ENCODE measurements at regions of chr20 and their contacts with region 1.

Region 1: DNA sequence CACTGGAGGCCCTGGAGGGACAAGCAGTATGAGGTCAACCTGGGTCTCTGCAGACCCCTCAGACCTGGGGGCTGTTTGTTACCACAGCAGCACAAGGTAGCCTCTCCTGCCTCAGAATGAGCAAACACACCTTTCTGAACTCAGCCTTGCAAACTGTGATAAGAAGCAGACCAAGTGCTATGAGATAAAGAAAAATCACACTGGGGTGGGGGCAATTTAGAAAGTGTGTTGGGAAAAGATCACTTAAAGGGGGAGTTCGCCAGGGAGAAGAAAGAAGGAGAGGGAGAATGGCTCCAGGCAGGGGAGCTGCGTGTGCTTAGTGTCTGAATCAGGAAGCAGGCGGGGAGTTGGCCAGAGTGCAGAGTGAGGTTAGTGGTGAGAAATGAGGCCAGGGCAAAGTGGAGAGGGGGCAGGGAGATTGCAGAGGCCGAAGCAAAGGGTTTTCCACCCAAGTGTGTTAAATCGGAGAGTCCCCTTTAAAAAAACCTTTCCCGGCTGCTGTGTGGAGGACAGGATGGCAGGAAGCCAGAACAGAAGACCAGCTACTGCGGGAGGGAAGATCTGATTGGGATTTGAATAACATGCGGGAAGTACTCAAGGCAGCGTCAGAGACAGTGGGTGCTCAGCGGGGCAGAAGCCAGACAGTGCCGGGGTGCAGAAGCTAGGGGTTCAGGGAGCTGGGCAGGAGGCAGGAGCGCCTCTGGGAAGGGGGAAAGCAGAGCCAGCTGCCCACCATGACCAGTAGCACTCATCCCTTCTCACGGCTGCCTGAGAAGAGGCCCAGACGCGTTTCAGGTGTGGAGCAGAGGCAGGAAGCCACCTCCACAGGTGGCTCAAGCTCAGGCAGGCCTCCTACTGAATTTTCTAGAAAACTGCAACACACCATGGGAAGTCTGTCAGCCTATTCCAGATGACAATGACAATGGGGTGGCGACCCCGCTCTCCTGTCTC is 9.0 kb downstream of the ADA start:
- DNase-seq: no peak
- ATAC-seq: peak; percentile 15
- H3K4me3 Mint-ChIP-seq: peak overlapping the region; percentile 42
- H3K27ac Mint-ChIP-seq: peak overlapping the region; percentile 73
- H3K4me1 Mint-ChIP-seq: peaks cover 69% of the 10 kb centered on the region
- H3K27me3 Mint-ChIP-seq: no peaks in the 10 kb centered on the region
- CTCF ChIP-seq: no peak

Region 2: DNA sequence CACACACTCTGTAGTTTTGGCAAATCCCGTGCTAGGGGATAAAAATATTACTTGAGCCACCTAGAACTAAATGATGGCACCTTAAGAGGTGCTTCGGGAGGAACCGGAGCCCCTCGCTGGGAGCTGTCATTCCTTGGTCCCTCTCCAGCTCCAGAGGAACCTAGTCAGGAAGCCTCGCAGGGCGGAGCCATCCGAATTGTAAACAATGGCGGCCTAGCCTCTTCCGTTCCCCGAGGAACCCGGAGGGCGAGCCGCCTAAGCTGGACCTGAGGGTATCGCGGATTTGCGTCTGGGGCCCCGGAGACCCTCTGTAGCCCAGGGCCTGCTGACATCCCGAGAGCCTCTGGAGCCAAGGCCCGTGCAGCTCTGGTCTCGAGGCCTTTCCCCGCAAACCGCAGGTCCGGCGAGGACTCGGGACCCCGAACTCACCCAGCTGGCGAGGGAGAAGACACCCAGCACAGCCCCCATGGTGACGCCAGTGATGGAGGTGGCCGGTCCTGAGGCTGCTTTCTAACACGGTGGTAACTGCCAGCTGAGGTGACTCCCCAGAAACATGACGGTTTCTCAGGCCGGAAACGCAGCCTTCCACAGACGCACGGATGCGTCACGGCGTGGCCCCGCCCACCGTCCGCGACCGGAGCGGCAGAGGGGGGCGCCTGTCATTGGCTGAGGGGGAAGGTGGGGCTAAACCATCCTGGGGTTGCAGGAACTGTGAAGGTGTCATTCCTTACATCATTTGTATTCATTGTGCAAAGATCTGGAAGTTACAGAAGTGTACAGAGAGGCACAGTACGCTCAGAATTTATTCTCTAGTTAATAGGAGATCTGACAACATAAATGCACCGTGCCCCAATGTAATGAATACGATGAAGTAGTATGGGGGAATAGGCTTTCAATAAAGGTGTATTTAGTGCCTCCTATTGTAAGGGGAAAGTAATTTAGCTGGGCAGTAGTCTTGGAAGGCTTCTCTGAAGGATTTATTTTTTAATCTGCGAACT is 120.7 kb before region 1 on chr20 and contains the start of gene SERINC3:
- CTCF ChIA-PET with region 1: no interaction called
- POLR2A ChIA-PET with region 1: interaction called, 9 read pairs
- intact Hi-C with region 1: loop called (anchors 2 kb)
- DNase-seq: peak; percentile 97
- ATAC-seq: peak; percentile 98
- H3K4me3 Mint-ChIP-seq: peak within 1 kb of the TSS; percentile 89
- H3K27ac Mint-ChIP-seq: peak within 1 kb of the TSS; percentile 83
- H3K4me1 Mint-ChIP-seq: peaks cover 44% of the 10 kb centered on the region
- H3K27me3 Mint-ChIP-seq: no peaks in the 10 kb centered on the region
- CTCF ChIP-seq: no peak
- total RNA-seq, gene SERINC3: 38.1 and 41.4 TPM in 2 replicates

Region 3: DNA sequence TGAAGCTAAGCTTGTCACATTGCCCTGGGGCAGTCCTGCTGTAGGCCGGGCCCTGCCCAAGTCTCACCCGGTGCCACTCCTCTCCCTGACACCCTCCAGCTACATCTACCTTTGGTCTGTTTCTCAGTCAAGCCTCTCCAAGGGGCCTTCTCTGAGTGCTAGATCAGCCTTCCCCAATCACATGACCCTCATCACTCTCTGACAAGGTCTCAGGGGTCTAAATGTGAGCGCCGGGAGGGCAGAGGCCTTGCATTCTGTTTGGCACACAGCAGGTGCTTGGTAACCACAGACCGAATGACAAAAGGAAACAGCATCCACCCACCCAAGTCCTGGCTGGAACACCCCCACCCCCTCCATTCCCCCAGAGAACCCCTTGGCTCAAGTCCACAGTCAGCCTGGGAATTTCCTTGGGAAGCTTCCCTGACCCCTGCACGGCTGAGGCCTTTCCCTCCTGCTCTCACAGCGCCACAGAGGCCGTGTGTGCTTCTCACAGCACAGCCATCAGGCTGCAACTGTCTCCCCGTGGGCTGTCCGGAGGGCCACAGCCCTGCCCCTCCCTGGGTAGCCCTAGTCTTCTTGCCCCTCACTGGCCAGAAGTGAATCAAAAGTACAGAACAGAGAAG is 27.2 kb before region 1 on chr20:
- CTCF ChIA-PET with region 1: interaction called, 6 read pairs
- POLR2A ChIA-PET with region 1: interaction called, 14 read pairs
- intact Hi-C with region 1: loop called (anchors 2 kb)
- DNase-seq: no peak
- ATAC-seq: peak; percentile 41
- H3K4me3 Mint-ChIP-seq: no peak overlapping the region
- H3K27ac Mint-ChIP-seq: peak overlapping the region; percentile 80
- H3K4me1 Mint-ChIP-seq: peaks cover 69% of the 10 kb centered on the region
- H3K27me3 Mint-ChIP-seq: no peaks in the 10 kb centered on the region
- CTCF ChIP-seq: no peak

Region 4: GRCh38 chr20:44683263-44684046 is 41.0 kb after region 1 on chr20:
- CTCF ChIA-PET with region 1: interaction called, 7 read pairs
- POLR2A ChIA-PET with region 1: no interaction called
- intact Hi-C with region 1: loop called (anchors 2 kb)
- DNase-seq: no peak
- ATAC-seq: peak; percentile 37
- H3K4me3 Mint-ChIP-seq: no peak overlapping the region
- H3K27ac Mint-ChIP-seq: no peak overlapping the region
- H3K4me1 Mint-ChIP-seq: peaks cover 2% of the 10 kb centered on the region
- H3K27me3 Mint-ChIP-seq: peaks cover 6% of the 10 kb centered on the region
- CTCF ChIP-seq: no peak

Region 5: GRCh38 chr20:44966030-44966961 is 323.8 kb after region 1 on chr20 and contains the start of gene STK4:
- CTCF ChIA-PET with region 1: no interaction called
- POLR2A ChIA-PET with region 1: no interaction called
- intact Hi-C with region 1: loop called (anchors 2 kb)
- DNase-seq: peak; percentile 98
- ATAC-seq: peak; percentile 78
- H3K4me3 Mint-ChIP-seq: peak within 1 kb of the TSS; percentile 99
- H3K27ac Mint-ChIP-seq: peak within 1 kb of the TSS; percentile 97
- H3K4me1 Mint-ChIP-seq: peaks cover 67% of the 10 kb centered on the region
- H3K27me3 Mint-ChIP-seq: no peaks in the 10 kb centered on the region
- CTCF ChIP-seq: no peak
- total RNA-seq, gene STK4: 219 and 245 TPM in 2 replicates

Region 6: DNA sequence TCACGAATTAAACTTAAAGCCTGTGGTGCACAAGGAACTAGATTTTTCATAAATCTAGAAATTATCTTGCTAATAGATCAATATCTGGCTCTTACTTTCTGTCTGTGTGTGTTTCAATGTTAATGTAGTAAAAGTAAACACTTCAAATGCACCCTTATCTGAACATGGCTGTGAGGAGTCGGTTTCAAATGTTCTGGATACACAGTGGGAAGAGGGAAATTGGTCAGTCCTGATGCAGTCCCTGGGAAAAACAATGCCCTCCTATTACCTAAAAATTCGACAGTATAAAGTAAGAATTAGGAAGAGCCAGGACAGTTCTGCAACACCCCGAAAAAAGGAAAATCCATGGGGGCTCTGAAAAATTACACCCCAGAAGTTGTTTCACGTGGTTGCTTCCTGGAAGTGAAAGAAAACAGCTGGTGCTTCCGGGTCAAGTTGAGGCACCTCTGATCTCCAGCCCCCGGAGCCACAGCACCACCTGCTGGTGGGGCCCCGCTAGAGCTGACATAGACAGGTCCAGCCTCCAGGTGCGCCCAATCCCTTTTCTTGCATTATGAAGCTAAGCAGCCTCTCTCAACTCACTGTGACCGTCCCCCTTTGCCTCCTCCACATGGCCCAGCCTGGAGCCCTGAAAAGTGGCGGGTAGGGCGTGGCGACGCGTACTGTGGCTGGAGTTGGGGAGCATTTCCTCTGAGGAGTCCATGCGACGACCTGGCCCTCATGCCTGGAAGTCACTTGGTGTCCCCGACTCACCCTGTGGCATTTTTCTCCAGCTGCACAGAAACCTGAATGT is 587.0 kb after region 1 on chr20:
- CTCF ChIA-PET with region 1: no interaction called
- POLR2A ChIA-PET with region 1: no interaction called
- intact Hi-C with region 1: no loop called
- DNase-seq: no peak
- ATAC-seq: no peak
- H3K4me3 Mint-ChIP-seq: no peak overlapping the region
- H3K27ac Mint-ChIP-seq: no peak overlapping the region
- H3K4me1 Mint-ChIP-seq: no peaks in the 10 kb centered on the region
- H3K27me3 Mint-ChIP-seq: peaks cover 11% of the 10 kb centered on the region
- CTCF ChIP-seq: no peak

Measured in activated B cell treated with CpG ODN at 0.5 μM for 24 hours (primary cell).